ENCODE measurements at regions of chr18 and their contacts with region 1.

Region 1: DNA sequence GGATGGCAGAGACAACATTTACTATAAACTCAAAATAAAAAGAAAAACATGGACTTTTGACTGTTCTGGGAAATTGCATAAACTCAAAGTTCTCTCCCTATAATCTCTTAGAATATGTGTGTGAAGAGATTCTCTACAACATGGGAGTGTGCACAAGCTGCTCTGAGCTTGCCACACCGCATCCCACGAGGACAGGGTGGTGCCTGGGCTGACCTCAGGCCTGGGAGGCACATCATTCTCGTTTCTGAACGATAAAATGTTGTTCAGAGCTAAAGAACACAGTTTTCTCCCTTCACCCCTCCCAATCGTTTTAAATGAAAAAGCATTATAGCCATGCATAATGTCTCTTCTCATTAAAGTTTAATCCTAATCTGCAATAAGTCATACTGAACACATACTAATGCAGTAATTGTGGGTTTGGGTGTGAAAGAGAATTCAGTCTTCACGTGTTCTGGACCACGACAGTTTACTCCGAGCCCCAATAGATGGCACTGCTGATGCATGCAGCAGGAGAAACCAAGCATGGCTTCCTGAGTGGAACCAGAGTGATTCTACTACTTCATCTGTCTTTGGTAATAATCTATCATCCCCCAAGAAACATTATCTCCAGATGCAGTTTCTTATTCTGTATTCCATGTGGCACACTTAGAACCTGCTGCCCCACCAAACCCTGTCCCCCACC is 46.9 kb upstream of the LAMA1 start:
- DNase-seq: no peak
- ATAC-seq: peak; percentile 71
- H3K4me3 ChIP-seq: no peak overlapping the region
- H3K27ac ChIP-seq: no peak overlapping the region
- H3K4me1 ChIP-seq: no peaks in the 10 kb centered on the region
- H3K27me3 ChIP-seq: no peaks in the 10 kb centered on the region; a peak in 1 of 5 replicates
- CTCF ChIP-seq: peak; percentile 45
- EP300 ChIP-seq: no peak
- POLR2A ChIP-seq: no peak
- RAD21 ChIP-seq: no peak

Region 2: DNA sequence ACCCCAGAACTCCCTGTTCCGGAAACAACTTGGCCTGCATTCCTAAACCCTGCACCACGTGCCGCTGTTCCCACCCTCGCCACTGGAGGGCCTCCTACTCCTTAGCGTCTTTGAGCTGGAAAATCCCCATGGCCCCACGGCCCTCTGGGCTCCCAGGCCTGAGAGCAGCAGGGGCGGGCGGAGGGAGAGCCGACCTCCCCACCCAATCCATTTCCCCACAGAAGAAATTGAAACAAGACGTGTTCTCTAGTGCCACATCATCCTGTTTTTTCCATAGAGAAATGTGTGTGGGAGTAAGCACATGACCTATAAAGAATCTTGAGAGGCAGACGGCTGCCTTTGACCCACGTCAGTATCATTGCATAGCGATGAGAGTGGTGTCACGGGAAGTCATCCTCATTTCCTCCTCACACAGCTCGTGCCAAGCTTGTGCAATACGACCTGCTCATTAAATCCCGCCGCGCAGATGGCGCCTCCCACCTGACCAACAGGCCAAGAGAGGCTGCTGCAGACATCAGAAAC is 126.1 kb before region 1 on chr18:
- CTCF ChIA-PET with region 1: no interaction called
- POLR2A ChIA-PET with region 1: no interaction called
- in situ Hi-C with region 1: loop called (anchors 25 kb)
- intact Hi-C with region 1: no loop called
- DNase-seq: peak; percentile 27
- ATAC-seq: peak; percentile 89
- H3K4me3 ChIP-seq: no peak overlapping the region
- H3K27ac ChIP-seq: no peak overlapping the region
- H3K4me1 ChIP-seq: peaks cover 12% of the 10 kb centered on the region
- H3K27me3 ChIP-seq: peaks cover 0 to 3% of the 10 kb centered on the region in 2 experiments; a peak in 1 of 5 replicates
- CTCF ChIP-seq: peak; percentile 69
- EP300 ChIP-seq: no peak
- POLR2A ChIP-seq: no peak
- RAD21 ChIP-seq: no peak; the same call in 1 of the 2 replicates

Measured in HepG2 (cell line).